Activated T-helper 2 cell treated with anti-CD3 and anti-CD28 coated beads, Interferon-gamma antibody, Interleukin-2, Interleukin-4, amounts not matched to agents 10 μg/mL and 5 μg/mL and 100 μg/mL, durations not matched to agents 14 hours and 24 hours and 36 hours (primary cell): ENCODE measurements at regions of chr9 and their contacts with region 1.

Region 1: GRCh38 chr9:13485068-13485596 is 205.6 kb upstream of the MPDZ start:
- DNase-seq: no peak
- H3K4me3 Mint-ChIP-seq: no peak overlapping the region
- H3K27ac Mint-ChIP-seq: no peak overlapping the region
- H3K4me1 Mint-ChIP-seq: no peaks in the 10 kb centered on the region
- H3K27me3 Mint-ChIP-seq: no peaks in the 10 kb centered on the region

Region 2: GRCh38 chr9:13598738-13599137 is 113.6 kb after region 1 on chr9:
- intact Hi-C with region 1: no loop called
- DNase-seq: no peak
- H3K4me3 Mint-ChIP-seq: no peak overlapping the region
- H3K27ac Mint-ChIP-seq: no peak overlapping the region
- H3K4me1 Mint-ChIP-seq: no peaks in the 10 kb centered on the region
- H3K27me3 Mint-ChIP-seq: no peaks in the 10 kb centered on the region

Region 3: DNA sequence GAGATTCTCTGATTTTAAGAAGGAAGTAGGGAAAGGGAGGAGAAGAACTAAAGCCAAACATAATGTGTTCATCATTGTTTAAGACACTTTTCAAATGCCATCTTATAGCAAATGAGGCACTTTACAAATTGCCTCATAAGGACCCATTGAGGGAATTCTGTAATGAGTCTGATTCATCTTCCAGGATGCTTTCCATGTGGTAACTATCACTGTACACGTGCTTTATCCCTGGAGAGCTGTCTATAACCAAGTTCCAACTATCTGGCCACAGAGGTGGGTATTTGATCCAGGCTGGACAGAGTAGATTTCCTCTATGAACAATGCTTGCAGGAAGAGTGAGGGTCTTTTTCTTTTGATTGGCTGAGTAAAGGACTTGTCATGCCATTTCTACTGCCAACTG is 1012.3 kb after region 1 on chr9:
- intact Hi-C with region 1: loop called (anchors 5 kb)
- DNase-seq: no peak
- H3K4me3 Mint-ChIP-seq: no peak overlapping the region
- H3K27ac Mint-ChIP-seq: no peak overlapping the region
- H3K4me1 Mint-ChIP-seq: no peaks in the 10 kb centered on the region
- H3K27me3 Mint-ChIP-seq: no peaks in the 10 kb centered on the region